ENCODE measurements at regions of chr2 and their contacts with region 1.

Region 1: GRCh38 chr2:222410534-222410933 is 13.8 kb upstream of the SGPP2 start:
- DNase-seq: no peak
- CTCF ChIP-seq: no peak

Region 2: DNA sequence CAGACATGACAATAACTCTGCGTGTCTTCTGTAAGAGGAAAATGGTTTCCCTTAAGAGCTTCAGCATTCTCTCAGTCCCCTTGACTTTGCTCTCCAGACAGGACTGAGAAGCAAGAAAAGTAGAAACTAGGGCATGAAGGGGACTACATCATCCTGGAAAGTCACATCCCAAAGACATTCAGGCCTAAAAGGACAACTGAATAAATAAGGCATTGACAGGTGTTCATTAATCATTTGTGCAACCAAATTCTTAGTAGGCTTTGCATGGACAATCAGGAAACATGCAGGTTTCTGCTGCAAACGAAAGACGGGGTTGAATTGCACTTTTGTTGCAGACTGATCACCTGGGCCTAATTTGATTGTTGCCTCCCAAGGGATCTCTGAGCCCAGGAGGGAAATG is 12.7 kb after region 1 on chr2:
- CTCF ChIA-PET with region 1: interaction called, 14 read pairs
- POLR2A ChIA-PET with region 1: no interaction called
- DNase-seq: no peak
- CTCF ChIP-seq: no peak